ENCODE measurements at regions of chr19 and their contacts with region 1.

Region 1: GRCh38 chr19:34096020-34096915 is 76.0 kb upstream of the LSM14A start:
- DNase-seq: no peak
- ATAC-seq: no peak
- H3K4me3 Mint-ChIP-seq: no peak overlapping the region
- H3K27ac Mint-ChIP-seq: no peak overlapping the region
- H3K4me1 Mint-ChIP-seq: no peaks in the 10 kb centered on the region
- H3K27me3 Mint-ChIP-seq: peaks cover 17% of the 10 kb centered on the region
- CTCF ChIP-seq: peak; percentile 16

Region 2: DNA sequence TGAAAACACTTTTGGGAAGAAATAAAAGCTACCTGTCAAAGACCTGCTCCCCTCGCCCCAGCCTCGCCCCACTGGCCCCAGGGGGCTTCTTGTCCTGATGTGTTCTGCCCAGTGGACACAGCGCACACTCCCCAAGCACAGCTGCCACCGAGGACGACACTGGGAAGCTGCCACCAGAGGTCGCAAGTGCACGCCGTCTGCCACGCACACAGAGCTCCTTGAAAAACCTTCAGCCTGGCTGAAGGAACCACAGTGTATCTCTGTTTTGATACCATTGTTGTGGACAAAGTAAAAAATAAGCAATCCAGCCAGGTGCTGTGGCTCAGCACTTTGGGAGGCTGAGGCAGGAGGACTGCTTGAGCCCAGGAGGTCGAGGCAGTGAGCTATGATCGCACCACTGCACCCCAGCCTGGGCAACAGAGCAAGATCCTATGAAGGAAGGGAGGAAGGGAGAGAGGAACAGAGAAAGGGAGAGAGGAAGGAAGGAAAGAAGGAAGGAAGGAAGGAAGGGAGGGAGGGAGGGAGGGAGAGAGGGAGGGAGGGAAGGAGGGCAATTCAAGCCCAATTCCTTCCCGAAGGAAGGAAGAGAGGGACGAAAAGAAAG is 665.5 kb before region 1 on chr19:
- CTCF ChIA-PET with region 1: interaction called, 8 read pairs
- POLR2A ChIA-PET with region 1: no interaction called
- intact Hi-C with region 1: loop called (anchors 10 kb)
- DNase-seq: peak; percentile 38
- ATAC-seq: peak; percentile 66
- H3K4me3 Mint-ChIP-seq: no peak overlapping the region
- H3K27ac Mint-ChIP-seq: no peak overlapping the region
- H3K4me1 Mint-ChIP-seq: no peaks in the 10 kb centered on the region
- H3K27me3 Mint-ChIP-seq: peaks cover 2% of the 10 kb centered on the region
- CTCF ChIP-seq: no peak